ENCODE measurements at regions of chr19 and their contacts with region 1.

Region 1: DNA sequence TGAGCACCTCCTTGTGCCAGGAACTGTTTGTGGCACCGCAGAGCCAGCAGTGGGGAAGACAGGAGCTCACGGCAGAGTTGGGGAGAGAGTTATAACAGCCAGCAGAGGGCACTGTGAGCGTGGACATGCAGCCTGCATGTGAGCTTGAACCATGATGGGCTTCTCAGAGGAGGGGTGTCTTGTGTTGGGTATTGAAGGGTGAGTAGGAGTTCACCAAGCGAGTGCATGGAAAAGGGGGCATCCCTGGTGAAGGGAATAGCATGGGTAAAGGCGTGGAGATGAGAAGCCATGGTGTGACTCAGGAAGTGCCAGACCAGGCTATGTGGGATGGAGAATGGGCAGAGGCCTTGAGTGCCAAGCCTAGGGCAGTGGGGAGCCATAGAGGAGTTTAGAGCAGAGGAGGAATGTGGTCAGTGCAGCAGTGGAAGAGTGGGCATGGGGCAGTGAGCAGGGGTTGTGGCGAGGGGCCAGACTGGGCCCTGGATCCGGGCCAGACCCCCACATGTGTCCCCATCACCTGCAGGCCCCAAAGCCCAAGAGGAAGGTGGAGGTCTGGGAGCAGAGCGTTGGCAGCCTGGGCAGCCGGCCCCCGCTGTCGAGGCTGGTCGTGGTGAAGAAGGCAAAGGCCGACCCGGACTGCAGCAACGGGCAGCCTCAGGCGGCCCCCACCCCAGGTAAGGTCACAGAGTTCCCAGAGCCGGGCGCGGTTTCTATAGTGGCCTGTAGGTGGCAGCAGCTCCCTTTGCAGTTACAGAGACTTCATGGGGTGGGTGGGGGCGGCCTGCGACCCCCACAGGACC is 11.8 kb upstream of the SHD start:
- DNase-seq: peak; percentile 77
- ATAC-seq: peak; percentile 73

Region 2: DNA sequence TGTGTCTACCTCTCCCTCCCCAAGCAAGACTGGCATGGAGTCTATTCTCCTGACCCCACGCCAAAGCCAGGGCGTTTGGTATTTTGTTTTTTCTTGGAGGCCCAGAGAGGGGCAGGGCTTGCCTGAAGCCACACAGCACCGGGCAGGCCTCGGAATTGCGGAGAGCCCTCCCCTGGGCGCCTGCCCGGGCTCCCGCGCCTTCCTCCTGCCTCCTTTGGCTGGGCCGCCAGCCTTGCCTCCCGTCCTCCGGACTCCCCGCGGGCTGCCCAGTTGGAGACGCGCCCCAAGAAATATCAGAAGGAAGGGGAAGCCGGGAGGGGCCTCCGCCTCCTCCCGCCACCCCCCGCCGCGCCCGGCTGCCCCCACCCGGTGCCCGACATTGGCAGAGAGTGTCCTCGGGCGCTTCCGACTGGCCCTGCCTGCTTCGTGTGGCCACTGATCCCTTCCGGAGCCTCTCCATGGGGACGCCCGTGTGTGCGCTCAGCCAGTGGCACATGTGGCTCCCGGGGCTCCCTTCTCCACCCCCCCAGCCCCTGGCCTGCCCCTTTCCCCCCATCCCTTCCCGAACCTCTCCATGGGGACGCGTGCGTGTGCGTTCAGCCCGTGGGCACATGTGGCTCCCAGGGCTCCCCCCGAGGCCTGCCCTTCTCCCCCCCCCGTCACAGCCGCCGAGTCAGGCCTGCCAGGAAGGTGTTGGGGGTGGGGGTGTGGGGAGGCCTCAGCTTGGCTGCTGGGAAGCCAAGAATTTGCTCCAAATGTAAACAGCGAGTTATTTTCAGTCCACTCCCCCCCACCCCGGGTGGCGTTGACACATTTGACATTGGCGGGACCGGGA is 863.6 kb before region 1 on chr19:
- intact Hi-C with region 1: no loop called
- DNase-seq: peak; percentile 88
- ATAC-seq: peak; percentile 79

Region 3: GRCh38 chr19:4369888-4370260 is 102.6 kb after region 1 on chr19:
- intact Hi-C with region 1: loop called (anchors 10 kb)
- DNase-seq: no peak
- ATAC-seq: peak; percentile 48

Measured in sciatic nerve (tissue), 2 donors.